ENCODE measurements at regions of chr7 and their contacts with region 1.

Region 1: GRCh38 chr7:130292682-130293257 is at the start of gene CPA4:
- DNase-seq: peak; percentile 94
- H3K4me3 ChIP-seq: peak within 1 kb of the TSS; percentile 21; the same call in 1 of the 2 replicates
- H3K27me3 ChIP-seq: no peaks in the 10 kb centered on the region
- CTCF ChIP-seq: no peak
- polyA plus RNA-seq, gene CPA4: 52.5 and 54.9 TPM in 2 replicates

Region 2: DNA sequence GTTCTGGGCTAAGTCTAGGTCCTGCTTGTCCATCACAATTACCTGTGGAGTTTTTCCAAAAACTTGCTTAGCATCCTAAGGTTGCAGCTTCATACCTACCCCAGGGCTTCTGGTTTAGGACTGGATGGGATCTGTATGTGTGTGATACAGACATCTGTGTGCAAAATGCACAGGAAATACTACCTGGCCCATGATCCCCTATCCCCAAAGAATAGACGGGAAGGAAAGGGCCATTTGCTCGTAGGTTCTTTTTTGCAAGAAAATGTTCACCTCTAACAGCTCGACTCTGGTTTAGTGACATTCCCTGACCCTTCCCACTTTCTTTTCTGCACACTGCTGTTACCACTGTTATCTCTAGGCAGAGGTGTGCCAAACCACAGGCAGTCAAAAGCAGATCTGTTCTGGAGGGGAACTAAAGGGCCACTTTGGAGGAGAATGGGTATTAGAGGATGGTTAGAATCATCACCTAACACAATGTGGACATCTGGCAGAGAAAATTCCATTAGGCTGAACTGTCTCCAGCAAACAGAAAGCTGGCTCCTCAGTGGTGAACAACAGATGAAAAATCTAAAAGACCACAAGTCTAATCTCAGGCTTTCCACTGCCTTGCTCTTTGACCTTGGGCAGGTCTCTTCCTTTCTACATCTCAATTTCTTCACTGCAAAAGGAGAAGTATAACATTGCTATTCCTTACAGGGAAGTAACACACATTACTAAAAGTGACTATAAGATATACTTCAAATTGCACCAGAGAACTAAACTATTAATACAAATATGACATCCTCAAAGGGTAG is 447.4 kb before region 1 on chr7:
- CTCF ChIA-PET with region 1: no interaction called
- POLR2A ChIA-PET with region 1: no interaction called
- DNase-seq: no peak
- H3K4me3 ChIP-seq: no peak overlapping the region
- H3K27me3 ChIP-seq: no peaks in the 10 kb centered on the region
- CTCF ChIP-seq: no peak

Region 3: GRCh38 chr7:130277763-130278643 is 14.8 kb before region 1 on chr7:
- CTCF ChIA-PET with region 1: interaction called, 11 read pairs
- POLR2A ChIA-PET with region 1: interaction called, 5 read pairs
- DNase-seq: no peak
- H3K4me3 ChIP-seq: no peak overlapping the region
- H3K27me3 ChIP-seq: no peaks in the 10 kb centered on the region
- CTCF ChIP-seq: peak; percentile 62

Region 4: DNA sequence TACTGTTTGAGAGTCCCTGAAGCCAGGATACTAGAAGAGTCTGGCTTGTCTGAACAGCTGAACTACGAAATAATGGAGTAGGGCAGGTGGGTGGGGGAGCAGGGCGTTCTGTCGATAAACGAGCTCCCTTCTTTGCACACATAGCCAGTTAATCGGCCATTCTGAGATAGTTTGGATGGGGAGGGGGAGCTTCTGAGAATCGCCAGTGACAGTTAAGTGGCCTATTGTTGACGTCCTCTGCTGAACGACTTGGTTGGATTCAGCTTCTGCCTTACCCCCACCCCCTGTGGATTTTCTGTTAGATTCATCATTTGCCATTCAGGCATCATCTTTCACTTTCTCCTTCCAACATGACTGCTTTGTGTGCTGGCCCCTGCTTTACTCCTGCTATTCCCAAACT is 52.4 kb after region 1 on chr7:
- CTCF ChIA-PET with region 1: no interaction called
- POLR2A ChIA-PET with region 1: interaction called, 10 read pairs
- DNase-seq: no peak
- H3K4me3 ChIP-seq: no peak overlapping the region
- H3K27me3 ChIP-seq: no peaks in the 10 kb centered on the region
- CTCF ChIP-seq: no peak

Region 5: DNA sequence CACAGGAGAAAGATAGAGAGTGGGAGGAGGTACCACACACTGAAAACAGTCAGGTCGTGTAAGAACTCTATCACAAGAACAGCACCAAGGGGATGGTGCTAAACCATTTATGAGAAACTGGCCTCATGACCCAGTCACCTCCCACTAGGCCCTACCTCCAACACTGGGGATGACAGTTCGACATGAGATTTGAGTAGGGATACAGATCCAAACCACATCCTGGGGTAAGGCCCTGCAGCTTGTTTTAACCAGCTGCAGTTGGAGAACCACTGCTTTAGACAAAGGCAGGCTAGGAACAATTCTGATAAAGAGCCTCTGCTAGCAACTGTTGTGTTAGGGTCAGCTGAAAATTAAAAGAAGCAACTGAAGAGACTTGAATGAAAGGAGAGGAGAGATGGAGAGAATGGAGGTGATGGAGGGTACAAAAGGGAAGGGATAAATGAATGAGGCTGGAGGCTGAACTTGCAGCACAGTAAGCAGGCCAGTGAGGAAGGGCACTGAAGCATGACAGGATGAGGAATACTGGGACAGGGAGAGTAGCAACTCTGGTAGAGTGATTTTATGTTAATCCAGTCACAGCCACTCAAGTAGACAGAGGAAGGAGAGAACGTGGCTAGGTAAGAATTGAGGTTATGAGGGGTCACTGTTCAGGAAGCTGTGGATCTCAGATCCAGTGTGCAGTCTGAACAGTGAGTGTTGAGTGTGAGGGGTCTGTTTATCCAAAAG is 222.7 kb after region 1 on chr7:
- CTCF ChIA-PET with region 1: no interaction called
- POLR2A ChIA-PET with region 1: interaction called, 12 read pairs
- DNase-seq: no peak
- H3K4me3 ChIP-seq: no peak overlapping the region
- H3K27me3 ChIP-seq: no peaks in the 10 kb centered on the region
- CTCF ChIP-seq: no peak

Region 6: GRCh38 chr7:130655286-130655685 is 362.5 kb after region 1 on chr7:
- CTCF ChIA-PET with region 1: no interaction called
- POLR2A ChIA-PET with region 1: no interaction called
- DNase-seq: no peak
- H3K4me3 ChIP-seq: no peak overlapping the region
- H3K27me3 ChIP-seq: no peaks in the 10 kb centered on the region
- CTCF ChIP-seq: no peak

Region 7: GRCh38 chr7:131413711-131414110 is 1120.9 kb after region 1 on chr7:
- CTCF ChIA-PET with region 1: no interaction called
- POLR2A ChIA-PET with region 1: no interaction called
- DNase-seq: no peak
- H3K4me3 ChIP-seq: no peak overlapping the region
- H3K27me3 ChIP-seq: no peaks in the 10 kb centered on the region
- CTCF ChIP-seq: no peak